ENCODE measurements at regions of chr1 and their contacts with region 1.

Region 1: DNA sequence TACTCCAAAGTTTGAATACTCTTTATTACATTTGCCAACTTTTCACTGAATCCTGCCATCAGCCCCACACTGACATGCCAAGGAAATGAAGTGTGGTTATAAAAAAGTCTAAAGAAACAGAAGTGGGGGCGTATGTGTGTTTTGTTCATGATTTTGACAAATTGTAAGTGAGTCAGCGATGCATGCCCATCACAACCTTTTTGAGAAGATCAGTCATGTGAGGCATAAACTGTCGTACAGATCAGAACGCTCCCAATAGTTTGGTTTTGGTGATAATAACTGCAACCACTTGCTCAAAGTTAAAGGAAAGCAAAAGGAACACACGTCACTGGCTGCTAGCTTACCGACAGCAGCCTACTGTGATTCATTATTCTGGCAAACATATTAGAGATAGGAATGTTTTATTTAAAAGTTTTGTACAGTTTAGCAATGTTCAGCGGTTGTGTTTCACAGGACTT is 95.6 kb downstream of the RGS2 start:
- DNase-seq: peak in 1 of 2 donors; percentile 79
- H3K4me3 ChIP-seq: peak overlapping the region in 1 of 2 donors; percentile 31
- H3K27ac ChIP-seq: peak overlapping the region; percentile 13 to 60
- H3K4me1 ChIP-seq: peaks cover 0 to 11% of the 10 kb centered on the region in 2 donors
- H3K27me3 ChIP-seq: no peaks in the 10 kb centered on the region
- CTCF ChIP-seq: no peak

Region 2: DNA sequence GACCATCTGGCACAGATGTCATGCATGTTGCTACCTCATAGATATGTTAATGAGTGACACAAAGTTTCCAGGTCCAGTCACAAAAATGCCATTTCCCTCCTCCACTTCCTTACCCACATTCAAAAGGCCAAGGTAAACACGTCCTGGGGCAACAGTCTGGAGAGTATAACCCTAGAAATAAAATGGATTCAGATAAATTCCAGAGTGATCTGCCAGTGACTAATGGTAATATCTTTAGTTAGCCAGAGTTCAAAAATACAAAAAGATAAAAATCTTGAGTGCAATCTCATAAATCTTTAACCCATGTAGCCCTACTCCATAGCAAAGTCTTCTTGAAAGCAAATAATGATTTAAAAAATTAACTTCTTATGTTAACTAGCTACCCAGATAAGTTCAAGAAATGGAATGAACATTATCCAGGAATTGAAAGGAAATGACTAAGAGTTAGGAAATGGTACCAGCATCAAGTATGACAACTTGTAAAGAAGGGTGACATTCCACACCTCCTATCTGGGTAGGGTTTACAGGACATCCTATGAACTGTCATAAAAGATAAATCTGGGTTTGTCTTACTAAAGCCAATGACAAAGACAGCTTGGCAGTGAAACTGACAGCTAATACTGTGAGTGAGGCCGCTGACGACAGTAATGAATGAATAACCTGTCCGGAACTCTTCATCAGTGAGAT is 77.5 kb before region 1 on chr1:
- intact Hi-C with region 1: loop called (anchors 5 kb)
- DNase-seq: peak in 1 of 2 donors; percentile 70
- H3K4me3 ChIP-seq: no peak overlapping the region
- H3K27ac ChIP-seq: peak overlapping the region; percentile 41 to 59
- H3K4me1 ChIP-seq: peaks cover 0 to 11% of the 10 kb centered on the region in 2 donors
- H3K27me3 ChIP-seq: no peaks in the 10 kb centered on the region
- CTCF ChIP-seq: no peak

Region 3: DNA sequence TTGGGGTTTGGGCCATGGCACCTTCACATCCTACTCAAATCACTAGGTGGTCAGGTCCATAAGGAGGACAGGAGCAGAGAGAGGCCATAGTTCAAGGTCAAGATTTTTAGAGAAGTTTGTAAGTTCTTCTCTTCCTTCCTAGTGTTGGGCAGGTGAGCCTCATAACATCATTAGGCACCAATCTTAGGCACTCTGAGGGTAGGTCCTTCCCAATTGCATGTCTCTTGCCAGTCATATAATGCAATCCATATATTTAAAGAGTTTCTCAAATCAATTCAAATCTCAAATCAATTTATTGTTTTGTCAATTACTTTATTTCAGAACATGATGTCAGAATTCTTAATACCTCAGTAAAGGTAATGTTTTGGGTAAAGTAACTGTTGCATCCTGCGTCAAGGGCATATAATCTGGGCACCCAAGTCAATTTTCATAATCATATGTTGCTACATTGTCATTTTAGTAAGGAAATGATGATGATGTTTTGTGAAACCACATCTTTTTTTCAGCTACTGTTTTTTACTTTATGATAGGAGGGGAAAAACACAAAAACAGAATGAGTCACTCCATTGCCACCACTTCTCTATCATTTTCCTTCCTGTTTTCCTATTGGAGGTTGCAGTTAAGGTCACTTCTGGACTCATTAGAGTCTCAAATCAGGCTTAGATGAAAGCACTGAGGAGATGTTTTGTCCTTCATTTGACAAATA is 32.0 kb after region 1 on chr1:
- intact Hi-C with region 1: no loop called
- DNase-seq: no peak
- H3K4me3 ChIP-seq: no peak overlapping the region
- H3K27ac ChIP-seq: no peak overlapping the region
- H3K4me1 ChIP-seq: no peaks in the 10 kb centered on the region
- H3K27me3 ChIP-seq: no peaks in the 10 kb centered on the region
- CTCF ChIP-seq: no peak

Region 4: DNA sequence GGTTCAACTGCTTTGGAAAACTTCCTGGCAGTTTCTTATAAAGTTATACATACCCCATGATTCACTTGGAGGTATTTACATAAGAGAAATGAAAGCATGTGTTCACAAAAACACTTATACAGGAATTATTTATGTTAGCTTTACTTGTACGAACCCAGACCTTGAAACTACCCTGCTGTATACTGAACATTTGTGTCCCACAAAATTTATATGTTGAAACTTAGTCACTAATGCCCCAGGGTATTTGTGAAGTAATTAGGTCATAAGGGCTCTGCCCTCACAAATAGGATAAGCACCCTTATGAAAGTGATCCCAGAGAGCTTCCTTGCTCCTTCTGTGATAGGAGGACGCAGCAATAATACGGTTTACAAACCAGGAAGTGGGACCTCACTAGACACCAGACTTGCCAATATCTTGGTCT is 324.7 kb after region 1 on chr1:
- intact Hi-C with region 1: no loop called
- DNase-seq: no peak
- H3K4me3 ChIP-seq: no peak overlapping the region
- H3K27ac ChIP-seq: no peak overlapping the region
- H3K4me1 ChIP-seq: no peaks in the 10 kb centered on the region
- H3K27me3 ChIP-seq: no peaks in the 10 kb centered on the region
- CTCF ChIP-seq: no peak

Region 5: DNA sequence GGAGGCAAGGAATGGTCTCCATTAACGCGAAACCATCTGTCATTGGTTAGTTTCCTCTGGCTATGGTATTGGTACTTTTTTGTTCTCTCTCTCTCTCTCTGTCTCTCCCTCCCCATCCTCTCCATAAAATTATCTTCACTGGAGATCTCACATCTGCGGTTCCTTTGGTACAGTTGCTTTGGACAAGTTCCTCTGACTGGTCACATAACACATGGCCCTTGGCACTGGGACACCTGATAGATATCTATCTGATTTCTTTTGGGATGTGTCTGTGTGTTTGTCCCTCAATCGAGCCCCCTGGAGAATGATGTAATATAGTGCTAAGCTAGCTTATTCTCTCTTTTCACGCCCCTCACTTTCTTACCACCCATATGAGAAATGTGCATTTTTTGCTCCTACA is 964.0 kb after region 1 on chr1:
- intact Hi-C with region 1: no loop called
- DNase-seq: no peak
- H3K4me3 ChIP-seq: no peak overlapping the region
- H3K27ac ChIP-seq: no peak overlapping the region
- H3K4me1 ChIP-seq: no peaks in the 10 kb centered on the region
- H3K27me3 ChIP-seq: no peaks in the 10 kb centered on the region
- CTCF ChIP-seq: no peak